Dorsolateral prefrontal cortex (tissue), 120 donors: ENCODE measurements at regions of chr14 and their contacts with region 1.

Region 1: DNA sequence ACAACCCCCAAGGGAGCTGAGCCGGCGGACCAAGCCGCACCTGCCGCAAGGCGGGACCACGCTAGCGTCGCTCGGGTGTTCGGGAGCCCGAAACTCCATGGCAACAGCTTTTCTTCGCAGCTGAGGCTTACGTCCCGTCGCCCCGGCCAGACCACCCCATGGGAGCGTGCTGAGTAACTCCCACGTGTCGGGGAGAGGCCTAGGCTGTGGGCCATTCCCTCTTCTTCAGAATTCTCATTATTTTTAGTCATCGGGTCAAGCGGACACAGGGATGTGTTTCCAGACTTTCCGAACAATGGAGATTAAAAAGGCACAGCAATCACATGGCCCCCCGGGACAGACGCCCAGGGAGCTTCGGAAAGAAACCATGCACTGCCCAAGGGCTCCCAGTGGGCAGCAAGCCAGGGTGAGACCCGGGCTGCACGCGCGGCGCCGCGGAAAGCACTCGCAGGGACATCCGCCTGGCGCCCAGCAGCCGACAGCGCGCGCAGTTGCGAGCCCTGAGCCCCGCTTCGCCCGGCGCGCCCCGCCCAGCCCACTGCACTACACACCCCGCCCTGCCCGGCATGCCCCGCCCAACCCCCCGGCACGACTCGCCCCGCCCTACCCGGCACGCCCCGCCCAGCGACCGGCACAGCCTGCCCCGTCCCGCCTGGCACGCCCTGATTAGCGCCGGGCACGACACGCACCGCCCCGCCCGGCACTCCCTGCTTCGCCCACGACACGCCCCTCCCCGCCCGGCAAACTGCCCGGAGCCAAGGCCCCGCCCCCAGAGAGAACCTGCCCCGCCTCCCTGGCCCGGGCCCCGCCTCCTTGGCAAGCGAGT is 422 bp upstream of the AK7 start:
- DNase-seq: peak; percentile 90 to 99 (median 94)
- H3K4me3 ChIP-seq: peak overlapping the region; percentile 45 to 93 (median 79)
- H3K27ac ChIP-seq: peak overlapping the region in 58 of 59 donors; percentile 9 to 93 (median 86)
- H3K27me3 ChIP-seq: no peaks in the 10 kb centered on the region
- CTCF ChIP-seq: peak in 21 of 56 donors; percentile 6 to 40 (median 18)

Region 2: GRCh38 chr14:96362965-96363756 is 28.3 kb before region 1 on chr14 and contains the starts of genes ATG2B and GSKIP:
- intact Hi-C with region 1: loop called in 1 of 2 experiments (anchors 2 kb)
- DNase-seq: peak; percentile 88 to 97 (median 94)
- H3K4me3 ChIP-seq: peak within 1 kb of the TSS; percentile 83 to 100 (median 98)
- H3K27ac ChIP-seq: peak within 1 kb of the TSS; percentile 66 to 98 (median 92)
- H3K27me3 ChIP-seq: no peaks in the 10 kb centered on the region
- CTCF ChIP-seq: peak in 18 of 56 donors; percentile 7 to 48 (median 23)
- total RNA-seq, gene ATG2B: 35.1 to 92.2 (median 66.5) TPM
- total RNA-seq, gene GSKIP: 14.6 to 47.7 (median 30.5) TPM

Region 3: DNA sequence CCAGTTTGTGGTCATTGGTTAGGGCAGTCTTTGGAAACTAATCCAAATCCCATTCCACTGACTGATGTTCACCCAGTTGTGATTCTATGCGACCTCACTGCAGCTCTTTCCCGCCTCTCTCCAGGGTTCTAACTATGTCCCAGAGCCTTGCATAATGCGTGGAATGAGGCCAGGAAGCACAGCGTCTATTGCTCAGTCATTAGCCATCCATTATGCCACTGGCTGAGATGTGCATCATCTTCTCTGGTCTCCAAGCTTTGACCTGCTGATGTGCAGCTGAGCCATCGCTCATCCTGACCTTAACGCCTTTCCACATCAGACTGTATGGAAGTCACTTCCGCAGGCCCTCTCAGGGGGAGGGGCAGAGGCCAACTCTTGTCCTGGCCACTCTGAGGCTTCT is 290.3 kb after region 1 on chr14:
- intact Hi-C with region 1: no loop called
- DNase-seq: no peak
- H3K4me3 ChIP-seq: no peak overlapping the region
- H3K27ac ChIP-seq: no peak overlapping the region
- H3K27me3 ChIP-seq: peaks cover 0 to 10% (median 0%) of the 10 kb centered on the region in 45 donors
- CTCF ChIP-seq: no peak